ENCODE measurements at regions of chr1 and their contacts with region 1.

Region 1: GRCh38 chr1:225318706-225319575 is 108.9 kb downstream of the LBR start:
- DNase-seq: peak; percentile 72
- H3K27ac ChIP-seq: no peak overlapping the region
- CTCF ChIP-seq: peak; percentile 81

Region 2: DNA sequence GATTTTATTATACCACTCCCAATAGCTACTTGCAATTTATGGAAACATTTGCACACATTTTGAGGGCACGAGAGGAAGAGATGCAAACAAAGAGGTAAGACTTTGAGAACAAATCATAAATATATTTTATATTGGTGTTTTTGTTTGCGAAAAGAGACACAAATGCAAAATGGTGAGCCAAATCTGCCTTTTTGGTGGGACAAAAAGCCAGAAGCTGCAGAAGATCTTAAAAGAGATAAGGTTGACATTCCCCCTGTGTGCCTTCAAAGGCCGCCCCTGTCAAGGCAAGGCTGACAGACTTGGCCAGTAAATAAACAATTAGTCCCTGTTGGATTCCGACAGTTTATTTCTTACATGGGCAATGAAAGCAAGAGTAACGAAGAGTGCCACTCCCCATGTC is 13.9 kb before region 1 on chr1:
- CTCF ChIA-PET with region 1: interaction called, 10 read pairs
- POLR2A ChIA-PET with region 1: no interaction called
- DNase-seq: no peak
- H3K27ac ChIP-seq: no peak overlapping the region
- CTCF ChIP-seq: no peak

Region 3: GRCh38 chr1:225329041-225329440 is 10.1 kb after region 1 on chr1:
- CTCF ChIA-PET with region 1: interaction called, 23 read pairs
- POLR2A ChIA-PET with region 1: no interaction called
- DNase-seq: peak; percentile 20
- H3K27ac ChIP-seq: no peak overlapping the region
- CTCF ChIP-seq: no peak

Region 4: GRCh38 chr1:225343624-225344023 is 24.7 kb after region 1 on chr1:
- CTCF ChIA-PET with region 1: interaction called, 11 read pairs
- POLR2A ChIA-PET with region 1: no interaction called
- DNase-seq: peak; percentile 32
- H3K27ac ChIP-seq: no peak overlapping the region
- CTCF ChIP-seq: peak; percentile 61

Region 5: DNA sequence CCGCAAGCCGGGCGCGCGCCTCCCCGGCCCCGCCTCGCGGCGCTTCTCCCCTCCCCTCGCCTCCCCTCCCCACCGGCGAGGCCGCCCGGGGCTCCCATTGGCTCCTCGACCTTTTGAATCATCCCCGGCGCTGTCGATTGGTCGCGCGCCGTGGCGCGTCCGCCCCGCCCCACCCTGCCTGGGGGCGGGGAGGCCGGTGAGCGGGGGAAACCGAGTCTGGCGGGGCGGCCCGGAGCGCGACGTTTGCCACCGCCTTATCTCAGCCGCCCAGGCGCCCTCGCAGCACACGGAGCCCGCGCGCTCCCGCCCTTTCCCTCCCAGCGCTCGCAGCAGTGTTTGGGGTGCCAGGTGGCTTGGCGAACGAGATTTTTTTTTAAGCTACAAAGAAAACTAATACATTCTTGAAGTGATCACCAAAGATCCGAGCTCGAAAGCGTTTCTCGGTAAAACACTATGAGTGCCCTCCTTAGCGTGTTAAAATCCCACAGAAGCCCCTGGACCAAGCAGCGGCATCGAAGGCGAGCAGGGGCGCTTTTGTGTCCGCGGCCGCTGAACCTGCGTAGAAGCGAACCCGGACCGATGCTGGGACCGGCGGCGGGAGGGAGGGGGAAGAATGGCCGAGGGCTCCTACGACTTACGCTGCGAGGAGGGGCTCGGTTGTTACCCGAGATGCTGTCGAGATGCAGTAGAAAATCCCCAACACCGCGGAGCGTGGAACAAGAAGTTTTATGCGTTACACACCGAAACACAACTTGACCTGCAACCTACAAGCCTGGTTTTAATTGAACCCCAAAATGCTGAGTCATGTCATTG is 109.3 kb after region 1 on chr1:
- CTCF ChIA-PET with region 1: interaction called, 10 read pairs
- POLR2A ChIA-PET with region 1: no interaction called
- DNase-seq: peak; percentile 98
- H3K27ac ChIP-seq: peak overlapping the region; percentile 94
- CTCF ChIP-seq: no peak

Measured in RWPE1 (cell line).